ENCODE measurements at regions of chr11 and their contacts with region 1.

Region 1: GRCh38 chr11:18395735-18396504 is 1.6 kb downstream of the LDHA start:
- DNase-seq: peak; percentile 99
- H3K4me3 ChIP-seq: peak overlapping the region; percentile 96
- H3K27ac ChIP-seq: peak overlapping the region; percentile 86
- H3K27me3 ChIP-seq: no peaks in the 10 kb centered on the region
- CTCF ChIP-seq: no peak

Region 2: DNA sequence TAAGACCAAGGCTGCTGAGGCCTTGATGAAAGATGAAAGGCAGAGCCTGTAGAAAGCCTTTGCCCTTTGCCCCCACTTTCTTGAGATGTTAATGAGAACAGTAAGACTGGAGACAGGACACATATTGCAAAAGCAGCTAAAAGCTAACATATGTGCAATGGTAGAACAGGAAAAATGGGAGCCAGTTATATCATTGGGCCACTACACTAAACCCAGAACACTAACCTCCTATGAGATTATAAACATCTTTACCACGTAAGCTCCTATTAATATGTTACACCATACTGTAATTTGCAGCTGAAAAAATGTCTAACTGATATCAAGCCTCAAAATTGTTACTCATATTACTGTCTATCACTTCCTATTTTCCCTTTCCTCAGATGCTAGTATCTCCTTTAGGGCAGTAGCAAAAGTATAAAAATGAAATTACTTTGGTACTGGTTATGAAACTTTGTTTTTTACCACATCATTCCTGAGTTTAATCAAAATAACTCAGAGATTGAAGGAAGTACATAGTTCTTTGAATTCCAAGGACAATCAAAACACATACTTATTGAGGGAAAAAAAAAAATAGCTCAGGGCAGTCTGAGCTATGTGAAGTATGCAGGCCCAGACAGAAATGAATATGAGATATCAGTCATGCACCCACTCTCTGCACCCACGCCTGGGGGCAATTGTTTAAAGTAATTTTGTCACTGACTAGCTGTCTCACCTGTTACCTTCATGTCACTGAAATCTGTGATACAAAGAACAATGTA is 83.1 kb before region 1 on chr11:
- CTCF ChIA-PET with region 1: no interaction called
- POLR2A ChIA-PET with region 1: interaction called, 18 read pairs
- DNase-seq: peak; percentile 8
- H3K4me3 ChIP-seq: no peak overlapping the region
- H3K27ac ChIP-seq: no peak overlapping the region
- H3K27me3 ChIP-seq: no peaks in the 10 kb centered on the region
- CTCF ChIP-seq: no peak

Region 3: GRCh38 chr11:18321980-18322711 is 73.8 kb before region 1 on chr11 and contains the starts of genes GTF2H1 and HPS5:
- CTCF ChIA-PET with region 1: no interaction called
- POLR2A ChIA-PET with region 1: interaction called, 40 read pairs
- DNase-seq: peak; percentile 96
- H3K4me3 ChIP-seq: peak within 1 kb of the TSS; percentile 87
- H3K27ac ChIP-seq: peak within 1 kb of the TSS; percentile 93
- H3K27me3 ChIP-seq: no peaks in the 10 kb centered on the region
- CTCF ChIP-seq: no peak
- polyA plus RNA-seq, gene GTF2H1: 40.0 and 53.2 TPM in 2 replicates
- polyA plus RNA-seq, gene HPS5: 12.5 and 14.9 TPM in 2 replicates

Region 4: GRCh38 chr11:18383388-18384156 is 12.3 kb before region 1 on chr11:
- CTCF ChIA-PET with region 1: interaction called, 6 read pairs
- POLR2A ChIA-PET with region 1: interaction called, 94 read pairs
- DNase-seq: peak; percentile 64
- H3K4me3 ChIP-seq: no peak overlapping the region
- H3K27ac ChIP-seq: peak overlapping the region; percentile 91
- H3K27me3 ChIP-seq: no peaks in the 10 kb centered on the region
- CTCF ChIP-seq: no peak

Region 5: DNA sequence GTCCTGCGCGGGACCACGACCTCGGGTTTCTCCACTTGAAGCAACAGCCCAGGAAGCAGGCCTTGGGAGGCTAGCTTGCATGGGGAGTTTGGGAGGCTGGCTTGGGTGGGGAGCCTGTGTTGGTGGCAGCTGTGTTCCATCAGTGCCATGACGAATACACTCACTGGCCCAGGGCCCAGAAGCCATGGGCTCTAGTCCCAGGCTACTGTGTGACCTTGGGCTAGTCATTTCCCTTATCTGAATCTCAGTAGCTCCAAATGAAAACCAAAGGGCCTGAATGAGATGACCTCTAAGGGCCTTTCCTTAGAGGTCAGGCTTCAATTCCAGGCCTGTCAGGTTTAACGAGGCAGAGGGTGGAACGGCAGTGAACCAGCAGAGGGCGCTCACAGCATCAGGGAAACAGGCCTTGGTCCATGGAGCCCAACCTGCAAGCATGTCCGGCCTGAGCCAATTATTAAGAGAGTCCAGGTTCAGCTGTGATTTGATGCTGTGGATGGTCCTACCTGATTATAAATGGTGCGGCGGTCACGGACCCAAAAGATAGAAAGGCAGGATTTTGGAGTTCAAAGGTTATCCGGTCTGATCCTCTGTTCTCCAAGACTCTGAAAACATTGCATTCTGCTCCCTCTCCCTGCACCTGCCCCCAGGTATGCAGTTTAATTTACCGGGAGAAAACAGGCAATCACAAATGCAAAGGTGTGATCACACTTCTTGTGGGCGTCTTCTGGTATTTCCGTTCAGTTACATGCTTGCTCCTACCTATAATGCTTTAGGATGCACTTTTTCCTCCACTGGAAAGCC is 379.8 kb after region 1 on chr11:
- CTCF ChIA-PET with region 1: no interaction called
- POLR2A ChIA-PET with region 1: no interaction called
- DNase-seq: no peak
- H3K4me3 ChIP-seq: no peak overlapping the region
- H3K27ac ChIP-seq: no peak overlapping the region
- H3K27me3 ChIP-seq: peaks cover 20% of the 10 kb centered on the region
- CTCF ChIP-seq: peak; percentile 58

Measured in AG04450 (cell line).